ENCODE measurements at regions of chr4 and their contacts with region 1.

Region 1: GRCh38 chr4:26252349-26253025 is 68.3 kb upstream of the RBPJ start:
- DNase-seq: no peak
- H3K4me3 ChIP-seq: no peak overlapping the region
- H3K27ac ChIP-seq: no peak overlapping the region
- H3K4me1 ChIP-seq: no peaks in the 10 kb centered on the region
- H3K27me3 ChIP-seq: peaks cover 2% of the 10 kb centered on the region
- CTCF ChIP-seq: no peak

Region 2: DNA sequence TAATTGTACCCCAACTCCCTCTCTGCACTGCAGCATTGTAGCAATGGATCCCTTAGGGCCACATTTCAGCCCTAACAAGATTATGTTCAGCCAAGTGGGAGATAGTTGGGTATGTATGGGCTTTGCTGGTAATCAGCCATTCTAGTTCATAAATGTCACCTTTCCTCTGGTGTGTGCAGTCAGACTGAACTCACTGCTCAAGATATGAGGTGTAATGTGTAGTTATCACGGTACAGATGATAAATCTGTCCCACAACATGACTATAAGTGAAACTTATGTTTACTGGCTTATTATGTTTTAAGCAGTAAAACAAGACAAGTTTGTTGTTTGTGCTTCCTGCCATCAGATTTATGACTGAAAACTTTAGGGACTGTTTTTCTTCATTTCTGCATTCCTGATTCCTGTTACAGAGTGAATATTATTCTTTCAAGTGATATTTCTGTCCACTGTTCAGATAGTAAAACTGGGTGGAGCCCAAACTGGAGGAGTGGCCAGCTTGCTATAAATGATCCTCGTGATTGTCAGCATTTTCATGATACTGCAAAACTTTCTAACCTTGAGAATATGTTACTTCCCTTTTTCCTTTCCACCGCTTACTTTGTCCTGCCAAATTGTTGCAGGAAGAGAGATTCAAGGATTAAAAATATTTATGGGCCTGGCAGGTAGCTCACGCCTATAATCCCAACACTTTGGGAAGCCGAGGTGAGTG is 830.5 kb before region 1 on chr4:
- CTCF ChIA-PET with region 1: interaction called, 16 read pairs
- dilution Hi-C with region 1: no loop called
- in situ Hi-C with region 1: no loop called
- intact Hi-C with region 1: no loop called
- DNase-seq: no peak
- H3K4me3 ChIP-seq: no peak overlapping the region
- H3K27ac ChIP-seq: no peak overlapping the region
- H3K4me1 ChIP-seq: no peaks in the 10 kb centered on the region
- H3K27me3 ChIP-seq: no peaks in the 10 kb centered on the region
- CTCF ChIP-seq: no peak

Region 3: GRCh38 chr4:26235500-26235899 is 17.0 kb before region 1 on chr4:
- CTCF ChIA-PET with region 1: no interaction called
- dilution Hi-C with region 1: no loop called
- in situ Hi-C with region 1: no loop called
- intact Hi-C with region 1: no loop called
- DNase-seq: peak; percentile 49
- H3K4me3 ChIP-seq: no peak overlapping the region
- H3K27ac ChIP-seq: no peak overlapping the region
- H3K4me1 ChIP-seq: no peaks in the 10 kb centered on the region
- H3K27me3 ChIP-seq: peaks cover 6% of the 10 kb centered on the region
- CTCF ChIP-seq: peak in 1 of 2 donors; percentile 32

Region 4: DNA sequence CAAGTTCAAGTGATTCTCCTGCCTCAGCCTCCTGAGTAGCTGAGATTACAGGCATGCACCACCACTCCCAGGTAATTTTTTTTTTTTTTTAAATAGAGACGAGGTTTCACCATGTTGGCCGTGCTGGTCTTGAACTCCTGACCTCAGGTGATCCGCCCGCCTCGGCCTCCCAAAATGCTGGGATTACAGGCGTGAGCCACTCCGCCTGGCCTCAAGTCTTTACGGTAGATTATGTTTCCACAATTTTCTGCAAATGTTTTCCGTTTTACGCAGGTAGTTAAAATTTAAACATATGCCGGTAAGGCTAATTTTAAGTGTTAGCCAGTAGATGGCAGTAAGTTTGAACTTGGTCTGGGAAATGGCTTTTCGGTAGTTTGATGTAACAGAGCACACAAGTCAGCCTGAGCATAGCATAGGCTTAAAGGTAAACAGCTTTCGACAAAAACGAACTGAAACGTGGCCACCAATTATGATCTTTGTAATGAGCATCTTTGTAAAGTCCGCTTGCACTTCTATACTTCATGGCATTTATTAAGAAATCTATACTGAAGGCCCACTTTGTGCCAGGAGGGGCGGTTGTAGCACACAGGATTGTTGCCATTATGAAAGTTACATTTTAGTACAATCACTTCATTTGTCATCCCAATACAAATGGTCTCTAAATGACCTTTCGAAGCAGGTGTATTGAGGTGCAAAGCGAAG is 206.7 kb after region 1 on chr4:
- CTCF ChIA-PET with region 1: no interaction called
- dilution Hi-C with region 1: no loop called
- in situ Hi-C with region 1: no loop called
- intact Hi-C with region 1: no loop called
- DNase-seq: peak; percentile 44
- H3K4me3 ChIP-seq: no peak overlapping the region
- H3K27ac ChIP-seq: no peak overlapping the region
- H3K4me1 ChIP-seq: no peaks in the 10 kb centered on the region
- H3K27me3 ChIP-seq: no peaks in the 10 kb centered on the region
- CTCF ChIP-seq: peak; percentile 62 to 69